ENCODE measurements at regions of chr12 and their contacts with region 1.

Region 1: DNA sequence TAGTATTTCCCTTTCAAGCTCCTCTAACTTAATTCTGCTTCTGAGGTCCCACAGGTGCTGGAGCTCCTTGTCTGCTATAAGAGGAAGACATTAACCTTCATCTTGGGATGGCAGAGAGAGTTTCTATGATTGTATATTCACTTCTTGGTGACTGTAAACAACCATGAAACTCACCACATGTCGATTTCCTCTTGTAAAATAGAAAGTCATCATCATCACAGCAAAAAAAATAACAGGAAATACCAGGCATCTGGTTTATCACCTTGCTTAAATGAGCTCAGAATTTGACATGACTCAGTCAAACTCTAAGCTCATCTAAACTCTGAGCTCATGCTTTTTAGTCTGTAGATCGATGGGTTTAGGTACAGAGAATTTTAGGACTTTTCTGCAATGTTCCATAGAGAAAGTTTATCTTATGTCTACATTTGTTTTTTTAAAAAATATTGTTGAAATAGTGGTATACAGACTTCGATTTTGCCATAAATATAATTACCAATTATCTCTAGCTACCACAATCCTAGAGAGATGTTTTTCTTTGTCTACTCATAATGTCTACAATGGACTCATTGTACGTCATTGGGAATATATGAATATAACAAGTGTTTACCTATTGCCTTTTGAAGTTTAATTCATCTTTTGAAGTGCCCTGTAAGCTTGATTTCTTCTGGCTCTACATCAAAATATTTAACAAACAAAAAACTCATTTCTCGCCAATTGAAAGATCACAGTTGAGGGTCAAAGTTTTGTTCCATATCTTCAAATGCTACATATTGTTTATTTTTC is 58.4 kb downstream of the IGF1 start:
- DNase-seq: no peak
- H3K4me3 Mint-ChIP-seq: no peak overlapping the region
- H3K27ac Mint-ChIP-seq: peak overlapping the region; percentile 60
- H3K4me1 Mint-ChIP-seq: peaks cover 11% of the 10 kb centered on the region
- H3K27me3 Mint-ChIP-seq: peaks cover 10% of the 10 kb centered on the region

Region 2: DNA sequence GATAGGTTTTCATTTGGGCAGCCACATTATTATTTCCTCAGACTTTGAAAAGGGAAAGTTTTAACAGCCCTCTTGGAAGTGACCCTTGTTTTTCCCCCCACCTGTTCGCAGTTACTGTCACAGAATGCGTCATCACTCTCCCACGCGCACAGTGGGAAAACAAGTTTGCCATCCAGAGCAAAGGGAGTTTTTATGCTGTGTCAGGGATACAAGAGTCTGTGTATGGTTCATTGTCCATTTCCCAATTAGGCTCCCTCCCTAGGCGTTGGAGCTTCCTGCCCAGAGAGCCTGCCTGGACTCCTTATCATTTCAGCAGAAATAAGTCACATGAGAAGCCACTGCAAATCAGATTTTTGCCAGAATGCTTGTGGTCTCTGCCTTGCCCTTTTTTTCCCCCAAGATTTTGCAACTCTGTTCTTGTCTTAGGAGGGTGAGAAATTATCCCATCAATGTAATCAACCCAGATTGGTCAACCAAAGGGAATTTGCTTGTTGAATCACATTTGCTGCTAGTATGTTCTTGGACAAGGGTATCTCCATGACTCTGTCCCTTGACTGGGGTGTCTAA is 45.7 kb before region 1 on chr12:
- intact Hi-C with region 1: no loop called
- DNase-seq: no peak
- H3K4me3 Mint-ChIP-seq: no peak overlapping the region
- H3K27ac Mint-ChIP-seq: no peak overlapping the region
- H3K4me1 Mint-ChIP-seq: peaks cover 8% of the 10 kb centered on the region
- H3K27me3 Mint-ChIP-seq: no peaks in the 10 kb centered on the region

Region 3: DNA sequence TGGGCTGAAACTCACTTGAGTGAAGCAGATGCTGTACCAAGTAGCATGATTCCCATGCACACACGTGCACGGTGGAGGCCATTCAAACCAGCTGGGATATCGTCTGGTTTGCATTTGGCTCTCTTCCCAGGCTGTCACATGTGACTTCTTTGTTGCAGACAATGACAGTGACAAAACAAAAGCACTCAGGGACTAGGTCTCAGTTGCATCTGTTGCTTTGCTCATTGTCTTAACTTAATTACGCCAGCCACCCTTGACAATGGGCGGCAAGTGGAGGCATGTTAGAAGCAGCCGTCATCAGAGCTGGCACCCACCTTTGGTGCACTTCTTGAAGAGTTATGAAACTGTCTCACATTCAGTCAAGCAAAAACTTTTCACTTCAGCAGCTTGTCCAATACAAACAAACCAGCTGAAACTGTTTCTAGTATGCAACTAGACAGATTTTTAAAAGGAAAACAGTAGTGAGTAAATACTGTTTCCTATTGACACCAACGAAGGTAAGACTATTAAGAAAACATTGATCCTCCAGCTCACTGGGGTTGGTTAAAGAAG is 15.9 kb before region 1 on chr12:
- intact Hi-C with region 1: no loop called
- DNase-seq: no peak
- H3K4me3 Mint-ChIP-seq: no peak overlapping the region
- H3K27ac Mint-ChIP-seq: no peak overlapping the region
- H3K4me1 Mint-ChIP-seq: peaks cover 17% of the 10 kb centered on the region
- H3K27me3 Mint-ChIP-seq: peaks cover 5% of the 10 kb centered on the region

Region 4: DNA sequence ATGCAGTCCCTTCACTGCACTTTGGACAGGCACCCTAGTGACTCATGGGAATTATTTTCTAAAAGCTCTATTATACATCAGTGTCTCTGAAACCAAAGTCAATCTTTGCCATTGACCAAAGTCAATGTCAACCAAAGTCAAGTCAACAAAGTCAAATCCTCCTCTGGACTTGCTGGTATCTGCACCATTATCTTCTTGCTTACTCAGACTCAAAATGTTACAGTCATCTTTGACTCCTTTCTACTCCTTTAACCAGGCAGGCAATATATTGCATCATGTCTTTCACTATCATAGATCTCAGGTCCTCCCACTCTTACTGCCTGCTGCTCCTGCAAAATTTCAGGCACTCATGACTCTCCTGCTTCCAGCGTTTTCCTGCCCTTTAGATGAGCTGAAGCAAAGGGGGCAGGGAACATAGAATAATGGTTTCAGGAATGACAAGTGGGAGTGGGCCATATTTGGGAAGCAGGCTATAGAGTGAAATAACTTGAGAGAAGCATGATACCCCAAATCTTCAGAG is 19.1 kb after region 1 on chr12:
- intact Hi-C with region 1: loop called (anchors 1 kb)
- DNase-seq: no peak
- H3K4me3 Mint-ChIP-seq: no peak overlapping the region
- H3K27ac Mint-ChIP-seq: no peak overlapping the region
- H3K4me1 Mint-ChIP-seq: peaks cover 8% of the 10 kb centered on the region
- H3K27me3 Mint-ChIP-seq: no peaks in the 10 kb centered on the region

Measured in activated T-helper 2 cell treated with anti-CD3 and anti-CD28 coated beads, Interferon-gamma antibody, Interleukin-2, Interleukin-4, amounts not matched to agents 10 μg/mL and 5 μg/mL and 100 μg/mL, durations not matched to agents 14 hours and 24 hours and 36 hours (primary cell).